ENCODE measurements at regions of chr3 and their contacts with region 1.

Region 1: DNA sequence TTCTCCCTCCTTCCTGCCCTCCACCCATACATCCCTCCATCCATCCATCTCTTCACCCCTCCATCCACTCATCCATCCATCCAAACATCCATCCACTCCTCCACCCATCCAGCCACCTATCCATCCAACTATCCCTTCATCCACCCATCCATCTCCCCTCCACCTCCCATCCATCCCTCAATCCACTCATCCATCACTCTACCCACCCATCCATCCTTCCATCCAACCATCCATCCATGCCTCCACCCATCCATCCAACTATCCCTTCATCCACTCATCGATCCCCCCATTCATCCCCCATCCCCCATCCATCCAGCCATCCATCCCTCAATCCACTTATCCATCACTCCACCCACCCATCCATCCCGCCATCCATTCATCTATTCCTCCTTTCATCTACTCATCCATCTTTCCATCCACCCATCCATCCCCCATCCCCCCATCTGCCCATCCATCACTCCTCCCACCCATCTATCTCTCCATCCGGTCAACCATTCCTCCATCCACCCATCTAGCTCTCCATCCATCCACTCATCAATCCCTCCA is 132.4 kb upstream of the IQSEC1 start:
- DNase-seq: no peak
- ATAC-seq: no peak
- H3K4me3 ChIP-seq: no peak overlapping the region
- H3K27ac ChIP-seq: no peak overlapping the region
- H3K4me1 ChIP-seq: no peaks in the 10 kb centered on the region
- H3K27me3 ChIP-seq: no peaks in the 10 kb centered on the region
- CTCF ChIP-seq: no peak

Region 2: DNA sequence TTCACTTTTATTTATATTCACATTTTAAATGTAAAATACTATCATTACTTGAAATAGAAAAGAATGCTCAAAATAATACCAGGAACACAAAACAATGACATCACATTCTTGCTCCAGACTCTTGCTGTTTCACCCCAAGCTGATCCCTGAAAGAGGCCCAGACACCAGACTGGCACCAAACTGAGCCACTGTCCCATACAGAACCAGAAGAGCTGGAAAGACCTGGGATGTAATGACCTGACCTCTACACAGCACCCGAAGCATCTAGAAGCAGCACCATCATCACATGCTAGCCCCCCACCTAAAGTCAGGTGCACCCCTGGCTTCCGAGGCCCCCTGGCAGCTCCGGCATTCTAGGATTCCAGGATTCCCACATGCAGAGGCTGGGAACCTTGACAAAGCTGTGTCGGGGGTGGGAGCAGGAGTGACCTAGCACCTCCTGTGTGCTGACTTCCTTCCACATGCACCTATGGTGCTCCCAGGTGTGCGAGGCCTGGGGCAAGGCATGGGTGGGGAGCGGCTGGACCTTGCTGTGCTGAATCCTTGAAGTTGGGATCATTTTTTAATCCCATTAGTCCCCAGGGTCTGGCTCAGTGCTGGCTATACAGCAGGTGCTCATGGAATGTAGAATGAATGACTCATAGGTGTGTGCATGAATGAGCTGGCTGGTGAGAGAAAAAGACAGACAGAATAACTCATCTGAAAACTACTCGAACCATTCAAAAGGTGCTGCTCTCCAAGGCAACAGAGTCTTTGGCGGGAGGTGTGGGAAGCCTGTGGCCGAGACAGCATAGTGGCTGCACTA is 12.3 kb after region 1 on chr3:
- CTCF ChIA-PET with region 1: no interaction called
- POLR2A ChIA-PET with region 1: no interaction called
- intact Hi-C with region 1: no loop called
- DNase-seq: peak; percentile 97
- ATAC-seq: peak; percentile 87
- H3K4me3 ChIP-seq: no peak overlapping the region
- H3K27ac ChIP-seq: peak overlapping the region; percentile 76
- H3K4me1 ChIP-seq: peaks cover 45% of the 10 kb centered on the region
- H3K27me3 ChIP-seq: no peaks in the 10 kb centered on the region
- CTCF ChIP-seq: no peak

Region 3: GRCh38 chr3:13241621-13242363 is 36.1 kb after region 1 on chr3:
- CTCF ChIA-PET with region 1: no interaction called
- POLR2A ChIA-PET with region 1: interaction called, 29 read pairs
- intact Hi-C with region 1: no loop called
- DNase-seq: no peak
- ATAC-seq: no peak
- H3K4me3 ChIP-seq: no peak overlapping the region
- H3K27ac ChIP-seq: no peak overlapping the region
- H3K4me1 ChIP-seq: peaks cover 13% of the 10 kb centered on the region; the same call in 1 of the 2 replicates
- H3K27me3 ChIP-seq: no peaks in the 10 kb centered on the region
- CTCF ChIP-seq: peak; percentile 35

Region 4: GRCh38 chr3:13898346-13898745 is 692.7 kb after region 1 on chr3:
- CTCF ChIA-PET with region 1: no interaction called
- POLR2A ChIA-PET with region 1: no interaction called
- intact Hi-C with region 1: no loop called
- DNase-seq: no peak
- ATAC-seq: no peak
- H3K4me3 ChIP-seq: no peak overlapping the region
- H3K27ac ChIP-seq: no peak overlapping the region
- H3K4me1 ChIP-seq: peaks cover 18% of the 10 kb centered on the region
- H3K27me3 ChIP-seq: no peaks in the 10 kb centered on the region
- CTCF ChIP-seq: no peak